ENCODE measurements at regions of chr6 and their contacts with region 1.

Region 1: DNA sequence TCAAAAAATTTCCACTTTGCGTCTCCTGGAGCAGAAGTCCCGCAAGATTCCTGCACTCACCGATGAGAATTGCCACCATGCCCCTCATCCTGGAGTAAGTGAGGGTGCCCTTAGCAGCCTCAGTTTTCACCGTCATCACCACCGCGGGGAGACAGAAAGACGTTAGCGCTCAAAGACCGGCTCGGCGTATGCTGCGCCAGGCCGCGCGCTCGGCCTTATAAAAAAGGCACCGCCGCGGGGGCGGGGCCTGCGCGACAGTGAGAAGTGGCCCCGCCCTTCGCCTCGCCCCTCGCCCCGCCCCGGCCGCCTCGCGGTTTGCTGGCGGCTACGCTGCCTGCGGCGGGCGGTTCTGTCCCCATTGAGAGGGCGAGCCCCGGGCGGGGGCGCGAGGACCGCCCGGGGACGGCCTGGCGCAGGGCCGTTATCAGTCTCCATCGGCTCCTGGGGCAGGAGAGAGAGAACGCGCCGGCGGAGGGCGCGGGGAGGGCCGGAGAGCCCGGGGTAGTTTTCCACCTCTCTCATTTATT is 122.3 kb upstream of the SLC2A12 start:
- DNase-seq: peak; percentile 92 to 97 (median 96)
- H3K4me3 ChIP-seq: peak overlapping the region; percentile 28 to 94 (median 62)
- H3K27ac ChIP-seq: peak overlapping the region; percentile 94 to 100 (median 98)
- H3K4me1 ChIP-seq: peaks cover 21 to 62% of the 10 kb centered on the region in 2 donors
- H3K27me3 ChIP-seq: no peaks in the 10 kb centered on the region
- CTCF ChIP-seq: peak in 1 of 6 experiments; percentile 16
- POLR2A ChIP-seq: peak; percentile 97 to 100

Region 2: DNA sequence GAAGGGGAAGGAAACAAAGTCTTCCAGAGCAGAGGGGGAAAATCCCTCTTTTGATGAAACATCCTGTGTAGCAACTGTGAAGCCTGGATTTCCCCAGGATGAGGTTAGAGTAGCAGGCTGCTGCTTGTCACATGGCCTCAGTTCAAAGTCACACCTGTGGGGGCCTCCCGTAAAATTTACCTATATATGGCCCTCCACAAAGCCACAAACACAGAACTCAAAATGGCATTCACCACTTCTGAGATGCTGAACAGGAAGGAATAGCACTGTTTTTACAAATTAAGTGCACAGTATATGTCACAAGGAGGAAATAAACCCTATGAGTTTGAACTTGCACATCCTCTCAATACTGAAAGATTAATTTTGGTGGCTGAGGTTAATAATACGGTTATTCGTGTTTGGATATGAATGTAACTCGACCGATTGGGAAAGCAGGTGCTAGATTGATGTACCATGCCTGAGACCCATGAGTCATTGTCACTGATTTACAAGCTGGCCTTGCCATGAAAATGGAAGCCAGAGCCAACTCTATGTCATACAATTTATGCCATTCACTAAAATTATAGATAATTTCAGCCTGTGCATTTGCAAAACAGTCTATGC is 72.6 kb after region 1 on chr6:
- intact Hi-C with region 1: loop called in 1 of 2 experiments (anchors 5 kb)
- DNase-seq: peak; percentile 37 to 79 (median 60)
- H3K4me3 ChIP-seq: no peak overlapping the region
- H3K27ac ChIP-seq: peak overlapping the region; percentile 9 to 83 (median 72)
- H3K4me1 ChIP-seq: peaks cover 37 to 42% of the 10 kb centered on the region in 2 donors
- H3K27me3 ChIP-seq: no peaks in the 10 kb centered on the region
- CTCF ChIP-seq: no peak
- POLR2A ChIP-seq: no peak

Region 3: DNA sequence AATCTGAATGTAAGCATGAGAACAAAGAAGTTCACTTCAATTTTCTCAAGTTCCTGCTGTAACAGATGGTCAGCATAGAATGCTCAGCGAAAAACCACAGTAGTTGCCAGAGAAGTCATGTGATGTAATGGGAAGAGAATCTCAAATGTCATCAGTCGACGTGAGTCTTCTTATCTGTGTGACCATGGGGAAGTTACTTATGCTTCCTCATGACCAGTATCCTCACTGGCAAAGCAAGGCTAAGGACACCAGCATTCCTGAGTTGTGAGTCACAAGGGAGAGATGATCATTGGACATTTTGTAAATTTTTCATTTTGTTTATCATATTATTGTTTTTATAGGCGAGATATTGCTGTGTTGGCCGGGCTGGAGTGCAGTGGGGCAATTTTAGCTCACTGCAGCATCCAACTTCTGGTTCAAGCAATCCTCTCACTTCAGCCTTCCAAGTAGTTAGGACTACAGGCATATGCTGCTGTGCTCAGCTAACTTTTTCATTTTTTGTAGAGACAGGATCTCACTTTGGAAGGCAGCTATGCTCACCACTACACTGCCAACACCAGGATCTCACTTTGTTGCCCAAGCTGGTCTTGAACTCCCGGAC is 121.3 kb after region 1 on chr6:
- intact Hi-C with region 1: loop called in 1 of 2 experiments (anchors 10 kb)
- DNase-seq: peak; percentile 79 to 94 (median 87)
- H3K4me3 ChIP-seq: no peak overlapping the region
- H3K27ac ChIP-seq: peak overlapping the region; percentile 72 to 95 (median 89)
- H3K4me1 ChIP-seq: peaks cover 40 to 45% of the 10 kb centered on the region in 2 donors
- H3K27me3 ChIP-seq: no peaks in the 10 kb centered on the region
- CTCF ChIP-seq: no peak
- POLR2A ChIP-seq: peak in 1 of 2 donors; percentile 64

Region 4: DNA sequence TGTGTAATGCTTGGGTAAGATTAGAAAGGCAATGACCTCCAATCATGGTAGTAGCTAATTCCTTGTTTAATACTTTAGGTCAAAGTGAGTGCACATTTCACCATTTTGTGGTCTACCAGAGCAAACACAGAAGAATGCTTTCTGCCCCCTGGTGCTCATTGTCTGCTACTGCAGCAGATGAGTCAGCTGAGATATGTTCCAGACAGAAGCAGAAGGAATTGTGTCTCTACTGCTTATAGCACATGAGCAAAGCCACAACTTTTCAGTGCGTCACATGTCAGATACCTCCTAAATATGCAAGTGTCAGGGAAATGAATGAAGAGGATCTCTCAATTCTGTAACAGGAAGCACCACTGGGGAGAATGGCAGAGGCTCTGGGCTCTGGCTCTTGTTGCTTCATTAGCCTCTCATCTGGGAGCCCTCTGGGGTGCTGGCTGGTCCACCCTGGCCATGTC is 466.3 kb after region 1 on chr6:
- intact Hi-C with region 1: loop called (anchors 5 to 10 kb)
- DNase-seq: peak; percentile 78 to 96 (median 87)
- H3K4me3 ChIP-seq: no peak overlapping the region
- H3K27ac ChIP-seq: peak overlapping the region in 1 of 5 donors; percentile 47
- H3K4me1 ChIP-seq: peaks cover 0 to 5% of the 10 kb centered on the region in 2 donors
- H3K27me3 ChIP-seq: no peaks in the 10 kb centered on the region
- CTCF ChIP-seq: peak; percentile 90 to 99 (median 98)
- POLR2A ChIP-seq: no peak

Region 5: DNA sequence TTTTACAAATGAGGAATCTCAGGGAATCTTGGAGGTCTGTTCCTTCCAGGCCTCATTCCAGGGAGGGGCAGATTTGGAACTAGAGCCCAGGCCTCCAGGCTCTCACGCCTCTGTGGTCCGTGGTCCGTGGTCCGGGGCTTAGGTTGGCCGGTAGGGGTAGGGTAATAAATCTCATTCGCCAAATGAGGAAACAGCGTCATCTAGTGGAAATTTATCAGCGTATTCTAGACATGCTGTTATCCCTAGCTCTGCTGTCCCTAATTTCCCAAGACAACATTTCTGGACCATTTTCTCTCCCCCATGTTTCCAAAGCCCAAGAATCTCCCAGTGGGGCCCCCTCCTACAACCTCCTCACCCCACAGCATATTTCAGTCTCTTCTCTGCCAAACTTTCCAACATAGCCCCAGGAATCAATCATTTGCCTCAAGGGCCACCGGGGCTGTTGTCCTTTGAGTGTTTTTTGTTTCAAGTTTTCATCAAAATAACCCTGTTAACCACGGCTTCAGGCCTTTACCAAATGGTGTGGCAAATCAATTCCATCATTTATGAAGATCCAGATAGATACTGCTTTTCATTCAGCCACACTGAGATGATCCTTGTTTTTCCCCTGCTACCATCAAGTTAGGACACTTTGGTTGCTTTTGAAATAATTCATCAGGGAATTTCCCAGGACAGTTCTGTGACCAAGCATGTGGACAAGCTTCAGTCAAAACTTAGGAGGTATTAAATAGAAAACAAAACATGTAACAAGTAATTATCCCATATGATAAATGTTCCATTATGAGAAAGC is 648.4 kb after region 1 on chr6:
- intact Hi-C with region 1: loop called in 1 of 2 experiments (anchors 5 kb)
- DNase-seq: peak; percentile 22 to 63 (median 49)
- H3K4me3 ChIP-seq: no peak overlapping the region
- H3K27ac ChIP-seq: peak overlapping the region in 1 of 5 donors; percentile 44
- H3K4me1 ChIP-seq: peaks cover 0 to 10% of the 10 kb centered on the region in 2 donors
- H3K27me3 ChIP-seq: no peaks in the 10 kb centered on the region
- CTCF ChIP-seq: peak; percentile 65 to 99 (median 94)
- POLR2A ChIP-seq: no peak

Measured in adrenal gland (tissue), 19 donors.